Caco-2 (cell line): ENCODE measurements at regions of chr4 and their contacts with region 1.

Region 1: DNA sequence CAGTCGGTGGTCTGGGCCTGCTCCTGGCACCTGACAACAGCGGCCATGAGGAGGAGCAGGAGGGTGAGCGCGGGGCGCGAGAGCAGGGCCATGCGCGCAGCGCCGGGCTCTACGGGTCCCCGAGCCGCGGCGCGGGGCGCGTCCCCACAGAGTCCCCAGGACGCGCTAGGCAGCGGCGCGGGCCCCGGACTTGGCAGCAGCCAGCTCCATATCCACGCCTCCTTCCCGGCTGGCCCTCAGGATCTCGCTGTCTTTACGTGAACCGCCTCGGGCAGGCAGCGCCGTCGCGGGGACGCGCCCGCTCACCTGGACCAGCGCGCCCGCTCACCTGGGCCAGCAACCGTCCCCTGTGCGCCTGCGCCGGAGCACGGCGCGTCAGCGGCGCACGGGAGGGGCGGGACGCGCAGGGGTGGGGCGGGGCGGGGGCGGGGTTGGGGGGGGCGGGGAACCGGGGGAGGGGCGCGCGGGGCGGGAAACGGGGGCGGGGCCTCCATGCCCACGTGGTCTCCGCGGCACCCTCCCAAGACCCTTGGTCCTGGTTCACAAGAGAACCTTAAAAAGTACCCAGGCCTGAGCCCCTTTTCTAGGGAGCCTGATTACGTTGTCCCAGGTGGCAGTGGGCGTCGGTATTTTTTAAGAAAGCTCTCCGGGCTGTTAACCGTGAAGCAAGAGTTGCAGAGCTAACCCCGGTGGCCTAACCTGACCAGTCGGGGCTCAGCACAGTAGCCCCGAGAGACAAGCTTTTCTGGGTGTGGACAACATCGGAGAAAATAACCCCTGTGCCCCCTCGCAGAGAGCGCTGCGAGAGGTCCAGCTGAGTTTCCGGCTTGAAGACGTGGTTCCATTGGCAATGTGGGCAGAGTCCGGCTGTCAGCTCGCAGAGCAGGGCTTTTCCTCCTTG is at the start of gene PLA2G12A:
- DNase-seq: peak; percentile 93
- H3K4me3 ChIP-seq: peak within 1 kb of the TSS; percentile 65
- H3K4me3 Mint-ChIP-seq: peak within 1 kb of the TSS; percentile 86
- H3K27ac Mint-ChIP-seq: peak within 1 kb of the TSS; percentile 84
- H3K4me1 ChIP-seq: 0 out of 2 replicates have a peak, but pooled peaks cover 5% of the 10 kb centered on the region
- H3K4me1 Mint-ChIP-seq: peaks cover 9% of the 10 kb centered on the region
- H3K27me3 ChIP-seq: no peaks in the 10 kb centered on the region
- H3K27me3 Mint-ChIP-seq: peaks cover 3% of the 10 kb centered on the region
- CTCF ChIP-seq: no peak
- total RNA-seq, gene PLA2G12A: 34.1 and 47.8 TPM in 2 replicates

Region 2: GRCh38 chr4:109433205-109434006 is 296.6 kb before region 1 on chr4 and contains the start of gene SEC24B:
- CTCF ChIA-PET with region 1: no interaction called
- POLR2A ChIA-PET with region 1: no interaction called
- intact Hi-C with region 1: loop called (anchors 5 kb)
- DNase-seq: peak; percentile 86 to 87
- H3K4me3 ChIP-seq: peak within 1 kb of the TSS; percentile 85
- H3K4me3 Mint-ChIP-seq: peak within 1 kb of the TSS; percentile 77
- H3K27ac Mint-ChIP-seq: peak within 1 kb of the TSS; percentile 57
- H3K4me1 ChIP-seq: peaks cover 20% of the 10 kb centered on the region
- H3K4me1 Mint-ChIP-seq: peaks cover 14% of the 10 kb centered on the region
- H3K27me3 ChIP-seq: no peaks in the 10 kb centered on the region
- H3K27me3 Mint-ChIP-seq: no peaks in the 10 kb centered on the region
- CTCF ChIP-seq: peak; percentile 42 to 84
- total RNA-seq, gene SEC24B: 29.0 and 29.5 TPM in 2 replicates

Region 3: DNA sequence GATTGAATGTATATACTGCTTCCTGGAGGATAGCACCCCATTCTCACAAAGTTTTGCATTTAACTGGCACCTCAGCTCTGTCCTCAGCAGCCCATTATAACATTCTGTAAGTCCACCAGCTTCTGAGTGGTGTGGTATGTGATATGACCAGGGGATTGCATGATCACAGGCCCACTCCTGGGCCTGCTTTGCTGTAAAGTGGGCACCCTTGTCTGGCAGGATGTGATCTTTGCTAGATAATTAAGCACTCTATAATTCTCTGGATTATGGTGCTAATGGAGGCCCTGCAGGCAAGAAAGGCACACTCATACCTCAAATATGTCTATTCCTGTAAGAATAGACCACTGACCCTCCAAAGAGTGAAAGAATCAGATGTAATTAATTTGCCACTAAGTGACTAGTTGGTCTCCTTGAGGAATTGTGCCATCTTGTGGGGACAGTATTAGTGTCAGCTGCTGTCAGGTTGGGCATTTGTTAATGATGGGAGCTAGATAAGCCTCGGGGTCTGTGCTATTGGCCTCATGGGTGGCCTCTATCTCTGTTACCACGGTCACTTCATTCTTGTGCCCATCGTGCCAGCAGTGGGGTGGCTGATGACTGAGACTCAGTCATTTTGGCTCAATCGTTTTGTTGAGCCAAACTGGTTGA is 74.1 kb after region 1 on chr4:
- CTCF ChIA-PET with region 1: no interaction called
- POLR2A ChIA-PET with region 1: no interaction called
- intact Hi-C with region 1: loop called (anchors 1 kb)
- DNase-seq: peak; percentile 29 to 33
- H3K4me3 ChIP-seq: no peak overlapping the region
- H3K4me3 Mint-ChIP-seq: no peak overlapping the region
- H3K27ac Mint-ChIP-seq: no peak overlapping the region
- H3K4me1 ChIP-seq: no peaks in the 10 kb centered on the region
- H3K4me1 Mint-ChIP-seq: no peaks in the 10 kb centered on the region
- H3K27me3 ChIP-seq: no peaks in the 10 kb centered on the region
- H3K27me3 Mint-ChIP-seq: peaks cover 5% of the 10 kb centered on the region
- CTCF ChIP-seq: peak in 1 of 2 experiments; percentile 47

Region 4: GRCh38 chr4:109815151-109816081 is 85.4 kb after region 1 on chr4 and contains the start of gene GAR1:
- CTCF ChIA-PET with region 1: no interaction called
- POLR2A ChIA-PET with region 1: interaction called, 3 read pairs
- intact Hi-C with region 1: loop called (anchors 2 kb)
- DNase-seq: peak; percentile 88 to 92
- H3K4me3 ChIP-seq: peak within 1 kb of the TSS; percentile 88
- H3K4me3 Mint-ChIP-seq: peak within 1 kb of the TSS; percentile 90
- H3K27ac Mint-ChIP-seq: peak within 1 kb of the TSS; percentile 97
- H3K4me1 ChIP-seq: no peaks in the 10 kb centered on the region; the same call in 1 of the 2 replicates
- H3K4me1 Mint-ChIP-seq: peaks cover 23% of the 10 kb centered on the region
- H3K27me3 ChIP-seq: no peaks in the 10 kb centered on the region
- H3K27me3 Mint-ChIP-seq: peaks cover 2% of the 10 kb centered on the region
- CTCF ChIP-seq: no peak
- total RNA-seq, gene GAR1: 30.8 and 31.6 TPM in 2 replicates

Region 5: DNA sequence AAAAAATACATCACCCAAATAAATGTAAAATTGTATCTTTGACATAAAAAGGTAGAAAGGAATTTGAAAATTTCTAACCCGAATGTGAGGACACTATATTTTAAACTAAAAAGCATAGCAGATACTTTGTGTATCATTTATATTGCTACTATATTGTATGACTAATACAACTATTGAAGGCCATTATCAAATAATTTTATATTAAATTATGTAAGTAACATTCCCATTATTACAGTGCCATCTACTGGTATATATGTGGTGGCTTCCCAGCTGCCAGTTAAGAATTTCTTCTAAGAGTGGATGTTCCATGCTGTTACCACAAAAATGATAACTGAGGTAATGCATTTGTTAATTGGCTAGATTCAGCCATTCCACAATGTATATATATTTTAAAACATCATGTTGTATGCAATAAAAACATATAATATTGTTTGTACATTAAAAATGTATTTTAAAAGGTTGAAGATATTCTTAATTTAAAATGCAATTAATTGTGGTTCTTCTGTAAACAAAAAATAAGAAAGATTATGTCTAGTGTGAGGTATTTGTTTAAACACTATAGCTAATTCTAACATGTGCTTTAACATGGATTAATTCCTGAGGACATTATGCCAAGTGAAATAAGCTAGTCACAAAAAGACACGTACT is 248.0 kb after region 1 on chr4:
- CTCF ChIA-PET with region 1: no interaction called
- POLR2A ChIA-PET with region 1: no interaction called
- intact Hi-C with region 1: loop called (anchors 1 kb)
- DNase-seq: no peak
- H3K4me3 ChIP-seq: no peak overlapping the region
- H3K4me3 Mint-ChIP-seq: no peak overlapping the region
- H3K27ac Mint-ChIP-seq: no peak overlapping the region
- H3K4me1 ChIP-seq: peaks cover 20% of the 10 kb centered on the region; the same call in 1 of the 2 replicates
- H3K4me1 Mint-ChIP-seq: peaks cover 13% of the 10 kb centered on the region
- H3K27me3 ChIP-seq: no peaks in the 10 kb centered on the region
- H3K27me3 Mint-ChIP-seq: no peaks in the 10 kb centered on the region
- CTCF ChIP-seq: peak; percentile 48 to 56

Region 6: GRCh38 chr4:110059556-110060191 is 329.7 kb after region 1 on chr4:
- CTCF ChIA-PET with region 1: no interaction called
- POLR2A ChIA-PET with region 1: no interaction called
- intact Hi-C with region 1: no loop called
- DNase-seq: no peak
- H3K4me3 ChIP-seq: no peak overlapping the region
- H3K4me3 Mint-ChIP-seq: no peak overlapping the region
- H3K27ac Mint-ChIP-seq: no peak overlapping the region
- H3K4me1 ChIP-seq: peaks cover 5% of the 10 kb centered on the region; the same call in 1 of the 2 replicates
- H3K4me1 Mint-ChIP-seq: peaks cover 7% of the 10 kb centered on the region
- H3K27me3 ChIP-seq: no peaks in the 10 kb centered on the region
- H3K27me3 Mint-ChIP-seq: no peaks in the 10 kb centered on the region
- CTCF ChIP-seq: no peak